PC-3 (cell line): ENCODE measurements at regions of chr7 and their contacts with region 1.

Region 1: DNA sequence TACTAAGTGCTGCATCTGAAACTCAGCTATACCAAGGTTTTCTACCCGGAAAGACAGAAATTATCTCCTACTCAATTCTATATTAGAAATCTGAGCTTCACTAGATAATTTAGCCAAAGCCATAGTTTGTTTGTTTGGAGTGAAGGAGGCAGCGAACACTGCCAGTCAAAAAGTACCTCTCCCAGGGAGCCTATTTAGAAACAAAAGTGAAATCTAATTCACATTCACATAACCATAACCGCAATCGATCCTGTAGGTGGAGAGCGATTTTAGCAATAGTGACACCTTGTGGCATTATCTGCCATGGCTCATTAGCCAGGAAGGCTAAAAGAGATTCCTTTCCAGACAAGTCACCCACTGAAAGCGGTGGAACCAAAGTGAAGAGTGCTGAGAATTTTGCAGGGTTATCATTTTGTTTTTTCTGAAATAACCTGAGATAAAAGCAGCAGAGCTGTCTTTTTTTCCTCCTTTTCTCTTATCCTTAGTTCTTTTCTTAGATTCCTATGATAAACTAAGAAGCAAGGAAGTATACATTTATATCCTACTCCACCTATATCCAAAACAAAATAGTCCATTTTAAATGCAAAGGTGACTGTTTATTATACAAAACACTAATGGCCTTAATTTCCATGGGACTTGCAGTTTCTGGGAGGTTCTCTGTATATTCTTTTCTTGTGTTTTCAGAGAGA is 83.7 kb upstream of the BET1 start:
- DNase-seq: peak; percentile 81
- ATAC-seq: peak; percentile 93
- H3K4me3 ChIP-seq: peak overlapping the region; percentile 45
- H3K27ac ChIP-seq: no peak overlapping the region
- H3K4me1 ChIP-seq: no peaks in the 10 kb centered on the region
- H3K27me3 ChIP-seq: peaks cover 31% of the 10 kb centered on the region
- CTCF ChIP-seq: peak; percentile 88

Region 2: DNA sequence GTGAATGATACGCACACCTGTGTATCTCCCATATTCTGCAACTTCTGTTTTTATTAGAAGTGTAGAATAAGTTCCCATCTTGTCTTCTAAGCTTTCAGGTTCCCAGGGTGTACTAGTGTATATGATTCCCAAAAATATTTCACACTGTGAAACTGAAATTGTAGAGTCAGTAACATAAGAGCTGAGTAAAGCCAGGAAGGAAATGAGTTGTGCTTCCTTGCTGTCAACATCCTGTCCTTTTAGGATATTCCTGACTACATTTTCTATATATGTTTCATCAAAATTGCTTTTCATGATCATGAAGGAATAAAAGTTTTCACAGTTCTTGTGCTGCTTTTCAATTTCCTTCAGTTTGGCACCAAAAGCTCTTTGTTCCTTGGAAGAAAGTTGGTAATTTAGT is 954.8 kb before region 1 on chr7:
- CTCF ChIA-PET with region 1: no interaction called
- POLR2A ChIA-PET with region 1: no interaction called
- intact Hi-C with region 1: no loop called
- DNase-seq: no peak
- ATAC-seq: no peak
- H3K4me3 ChIP-seq: no peak overlapping the region
- H3K27ac ChIP-seq: no peak overlapping the region
- H3K4me1 ChIP-seq: peaks cover 6% of the 10 kb centered on the region; the same call in 1 of the 2 replicates
- H3K27me3 ChIP-seq: no peaks in the 10 kb centered on the region
- CTCF ChIP-seq: no peak

Region 3: GRCh38 chr7:93799750-93800357 is 288.0 kb before region 1 on chr7:
- CTCF ChIA-PET with region 1: no interaction called
- POLR2A ChIA-PET with region 1: no interaction called
- intact Hi-C with region 1: loop called (anchors 1 kb)
- DNase-seq: peak; percentile 51
- ATAC-seq: peak; percentile 38; the same call in 1 of the 2 replicates
- H3K4me3 ChIP-seq: no peak overlapping the region
- H3K27ac ChIP-seq: no peak overlapping the region
- H3K4me1 ChIP-seq: no peaks in the 10 kb centered on the region
- H3K27me3 ChIP-seq: peaks cover 12% of the 10 kb centered on the region; the same call in 1 of the 2 replicates
- CTCF ChIP-seq: peak; percentile 71

Region 4: GRCh38 chr7:94004024-94004951 is 83.5 kb before region 1 on chr7 and contains the start of gene BET1:
- CTCF ChIA-PET with region 1: no interaction called
- POLR2A ChIA-PET with region 1: no interaction called
- intact Hi-C with region 1: loop called (anchors 2 kb)
- DNase-seq: peak; percentile 97
- ATAC-seq: peak; percentile 92
- H3K4me3 ChIP-seq: peak within 1 kb of the TSS; percentile 99
- H3K27ac ChIP-seq: peak within 1 kb of the TSS; percentile 64
- H3K4me1 ChIP-seq: peaks cover 19% of the 10 kb centered on the region
- H3K27me3 ChIP-seq: no peaks in the 10 kb centered on the region
- CTCF ChIP-seq: no peak
- total RNA-seq, gene BET1: 7.9 and 12.1 TPM in 2 replicates

Region 5: GRCh38 chr7:94276795-94277194 is 189.0 kb after region 1 on chr7:
- CTCF ChIA-PET with region 1: no interaction called
- POLR2A ChIA-PET with region 1: no interaction called
- intact Hi-C with region 1: loop called (anchors 2 kb)
- DNase-seq: peak; percentile 59
- ATAC-seq: peak; percentile 95
- H3K4me3 ChIP-seq: no peak overlapping the region
- H3K27ac ChIP-seq: no peak overlapping the region
- H3K4me1 ChIP-seq: no peaks in the 10 kb centered on the region
- H3K27me3 ChIP-seq: peaks cover 31% of the 10 kb centered on the region; the same call in 1 of the 2 replicates
- CTCF ChIP-seq: peak; percentile 67